A673 (cell line): ENCODE measurements at regions of chrX and their contacts with region 1.

Region 1: GRCh38 chrX:150982788-150983520 is at the start of gene HMGB3:
- DNase-seq: peak; percentile 95
- H3K4me3 ChIP-seq: peak within 1 kb of the TSS; percentile 63
- H3K27ac ChIP-seq: peak within 1 kb of the TSS; percentile 88
- H3K4me1 ChIP-seq: no peaks in the 10 kb centered on the region
- H3K27me3 ChIP-seq: no peaks in the 10 kb centered on the region
- CTCF ChIP-seq: no peak
- total RNA-seq, gene HMGB3: 173 and 193 TPM in 2 replicates

Region 2: DNA sequence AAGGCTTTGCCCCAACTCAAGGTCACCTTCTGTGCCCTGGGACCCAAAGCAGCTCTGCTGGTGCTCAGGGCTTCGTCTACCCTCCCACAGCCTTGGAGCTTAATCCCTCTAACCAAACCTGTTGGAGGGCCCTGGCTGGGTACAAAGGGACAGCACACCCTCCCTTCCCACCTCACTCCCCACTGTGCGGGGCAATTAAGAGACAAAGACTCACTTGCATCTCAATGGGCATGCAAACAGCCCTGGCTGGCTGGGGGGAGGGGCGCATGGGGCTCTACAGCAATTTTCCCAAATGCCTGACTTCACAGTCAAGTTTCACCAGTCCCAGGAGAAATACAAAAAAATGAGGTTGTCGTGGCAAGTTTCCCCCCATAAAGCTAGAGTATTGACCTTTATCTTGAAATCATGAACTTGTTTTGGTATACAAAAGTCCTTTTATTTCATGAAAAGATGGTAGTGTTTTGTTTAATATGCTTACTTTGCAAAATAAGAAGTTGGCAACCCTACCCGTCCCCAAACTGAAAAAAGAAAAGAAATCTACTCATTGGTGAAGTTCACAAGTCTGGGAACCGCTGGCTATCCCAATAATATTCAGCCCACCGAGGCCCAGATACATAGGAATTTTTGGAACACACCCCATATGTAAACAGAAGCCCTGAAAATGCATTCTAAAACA is 80.4 kb before region 1 on chrX:
- CTCF ChIA-PET with region 1: no interaction called
- POLR2A ChIA-PET with region 1: no interaction called
- intact Hi-C with region 1: loop called (anchors 5 kb)
- DNase-seq: peak; percentile 37
- H3K4me3 ChIP-seq: no peak overlapping the region
- H3K27ac ChIP-seq: no peak overlapping the region
- H3K4me1 ChIP-seq: no peaks in the 10 kb centered on the region
- H3K27me3 ChIP-seq: no peaks in the 10 kb centered on the region
- CTCF ChIP-seq: no peak